GM10248 (cell line): ENCODE measurements at regions of chr13 and their contacts with region 1.

Region 1: DNA sequence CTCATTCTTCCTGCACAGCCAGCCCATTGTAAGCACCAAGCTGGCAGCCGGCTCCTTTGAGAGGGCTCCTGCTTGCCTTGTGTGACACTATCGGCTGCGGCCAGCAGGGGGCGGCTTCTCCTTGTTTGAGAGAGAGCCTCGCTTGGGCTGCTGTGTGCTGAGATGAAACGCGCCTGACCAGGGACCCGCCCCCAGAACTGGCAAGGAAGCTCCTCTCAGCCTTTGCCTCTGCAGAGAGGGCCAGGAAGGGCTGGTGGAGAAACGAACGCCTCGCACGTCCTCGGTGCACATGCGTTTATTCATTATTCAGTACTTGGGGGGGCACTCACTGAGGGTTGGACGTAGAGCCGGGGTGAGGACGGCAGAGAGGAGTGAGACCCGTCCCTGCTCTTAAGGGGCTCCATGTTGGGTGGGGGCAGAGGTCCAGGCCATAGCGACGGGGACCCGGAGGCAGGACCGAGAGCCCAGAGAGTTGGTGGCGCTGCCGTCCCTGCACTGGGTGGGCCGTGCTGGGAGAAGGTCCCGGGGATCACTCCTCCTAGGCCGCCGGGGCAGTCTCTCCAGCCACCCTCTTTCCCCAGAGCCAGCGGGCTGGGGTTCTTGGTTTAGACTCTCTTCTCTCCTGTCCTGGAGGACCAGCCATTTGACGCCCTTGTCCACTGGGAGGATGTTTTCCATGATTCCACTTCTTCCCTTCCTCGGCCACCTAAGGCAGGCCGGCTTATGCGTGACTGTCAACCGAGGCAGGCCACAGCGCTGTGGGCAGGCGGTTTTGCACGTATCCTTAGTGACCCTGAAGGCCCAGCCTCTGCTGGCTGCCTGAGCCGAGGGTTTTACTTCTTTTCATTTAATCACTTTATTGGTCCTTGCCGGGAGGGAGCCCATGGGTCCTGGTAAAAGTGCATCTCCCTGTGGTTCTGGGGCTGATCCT is 174.5 kb downstream of the KATNAL1 start:
- DNase-seq: peak; percentile 90
- CTCF ChIP-seq: peak; percentile 97

Region 2: DNA sequence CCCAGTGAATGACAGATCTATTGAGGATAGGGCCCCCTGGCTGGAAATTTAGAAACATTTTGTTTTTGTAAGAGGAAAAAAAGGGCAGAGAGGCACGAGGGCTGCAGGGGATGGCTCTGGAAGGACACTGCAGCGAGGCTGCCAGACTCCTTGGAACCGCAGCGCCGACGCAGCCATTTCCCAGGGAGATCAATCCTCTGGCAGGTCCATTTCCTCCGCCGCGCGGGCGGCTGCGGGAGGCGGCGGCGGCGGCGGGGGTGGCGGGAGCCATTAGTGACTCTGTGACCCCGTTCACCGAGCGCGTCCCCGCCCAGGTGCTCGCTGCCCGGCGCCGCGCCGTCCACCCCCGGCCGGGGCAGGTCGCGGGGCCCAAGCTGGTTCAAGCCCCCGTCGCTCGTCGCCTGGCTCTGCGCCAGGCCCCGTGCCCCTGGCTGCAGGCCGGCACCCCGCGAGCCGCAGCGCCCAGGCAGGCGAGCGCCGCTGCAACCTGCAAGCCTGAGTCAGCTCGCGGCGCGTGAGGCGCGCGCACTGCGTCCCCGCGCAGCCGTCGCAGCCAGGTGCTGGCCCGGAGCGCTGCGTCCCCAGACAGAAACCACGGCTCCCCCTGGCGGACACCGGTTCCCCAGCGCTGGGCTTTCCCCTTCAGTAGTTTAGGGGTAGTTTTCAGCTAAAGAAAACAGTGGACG is 18.2 kb before region 1 on chr13:
- CTCF ChIA-PET with region 1: interaction called, 113 read pairs
- POLR2A ChIA-PET with region 1: no interaction called
- DNase-seq: peak; percentile 90
- CTCF ChIP-seq: peak; percentile 82

Region 3: DNA sequence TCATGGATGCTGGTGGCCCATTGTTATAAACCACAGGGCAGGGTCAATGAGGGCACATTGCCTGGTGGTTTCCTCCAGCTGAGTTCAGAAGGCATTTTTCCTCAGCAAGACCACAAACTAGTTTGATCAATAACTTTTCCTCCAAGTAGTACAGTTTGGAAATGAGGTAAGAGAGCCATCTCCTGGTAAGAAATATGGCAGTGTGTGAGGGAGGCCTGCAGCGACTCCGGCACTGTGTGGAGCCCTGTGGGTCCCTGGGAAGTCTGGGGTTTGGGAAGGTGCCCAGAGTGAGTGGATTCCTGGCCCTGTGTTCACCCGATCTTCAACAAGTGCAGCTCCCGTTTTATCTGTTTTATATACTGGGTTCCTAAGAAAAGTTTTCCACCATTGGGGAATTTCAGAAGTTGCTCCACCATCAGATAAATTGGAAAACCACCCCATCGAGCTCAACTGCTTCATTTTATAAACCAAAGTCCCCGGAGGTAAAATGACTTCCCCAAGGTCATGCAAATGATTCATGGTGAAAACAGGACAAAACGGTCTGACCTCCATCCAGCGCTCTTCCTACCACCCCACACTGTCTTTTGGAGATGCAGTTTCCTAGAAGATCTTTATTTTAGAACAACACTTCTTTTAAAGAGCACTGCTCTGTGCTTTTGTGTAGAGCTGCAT is 26.0 kb after region 1 on chr13:
- CTCF ChIA-PET with region 1: interaction called, 81 read pairs
- POLR2A ChIA-PET with region 1: no interaction called
- DNase-seq: no peak
- CTCF ChIP-seq: peak; percentile 22

Region 4: GRCh38 chr13:30306762-30307193 is 173.9 kb after region 1 on chr13:
- CTCF ChIA-PET with region 1: interaction called, 13 read pairs
- POLR2A ChIA-PET with region 1: no interaction called
- DNase-seq: peak; percentile 92
- CTCF ChIP-seq: no peak

Region 5: DNA sequence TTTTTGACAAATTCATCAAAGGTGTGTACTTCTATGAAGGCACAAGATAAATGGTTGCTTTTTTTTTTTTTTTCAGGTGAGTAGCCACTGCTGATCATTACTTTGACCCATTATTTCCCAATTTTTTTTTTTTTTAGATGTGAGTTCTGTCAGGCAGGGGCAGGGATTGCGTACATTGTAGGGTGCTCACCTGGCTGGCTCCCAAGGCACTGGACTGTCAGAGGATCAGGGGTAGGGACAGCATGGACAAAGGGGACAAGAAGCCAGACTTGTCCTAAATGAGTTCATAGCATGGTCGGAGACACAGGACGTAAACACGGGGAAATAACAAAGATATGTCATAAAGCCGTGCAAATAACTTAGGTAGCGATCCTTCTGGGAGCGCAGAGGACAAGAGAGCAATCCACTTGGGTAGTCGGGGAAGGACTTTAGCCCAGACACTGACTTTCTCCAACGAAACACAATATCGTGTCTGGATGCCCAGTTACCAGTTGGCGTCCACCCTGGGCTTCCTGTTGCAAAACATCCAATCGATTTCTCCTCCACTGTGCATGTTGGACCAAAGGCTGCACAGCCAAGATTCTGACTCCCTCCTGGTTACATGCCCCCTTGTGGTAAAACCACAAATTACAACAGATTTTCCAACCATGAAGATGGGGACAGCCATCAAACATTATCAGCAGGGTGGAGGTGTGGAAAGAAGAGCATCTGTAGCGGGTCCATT is 201.9 kb after region 1 on chr13:
- CTCF ChIA-PET with region 1: interaction called, 31 read pairs
- POLR2A ChIA-PET with region 1: no interaction called
- DNase-seq: peak; percentile 35
- CTCF ChIP-seq: peak; percentile 20

Region 6: GRCh38 chr13:30465585-30466357 is 332.9 kb after region 1 on chr13 and contains the start of gene HMGB1:
- CTCF ChIA-PET with region 1: interaction called, 14 read pairs
- POLR2A ChIA-PET with region 1: no interaction called
- DNase-seq: peak; percentile 95
- CTCF ChIP-seq: no peak

Region 7: GRCh38 chr13:30617315-30618185 is 484.7 kb after region 1 on chr13 and contains the start of gene USPL1:
- CTCF ChIA-PET with region 1: interaction called, 10 read pairs
- POLR2A ChIA-PET with region 1: no interaction called
- DNase-seq: peak; percentile 96
- CTCF ChIP-seq: no peak